ENCODE measurements at regions of chr11 and their contacts with region 1.

Region 1: GRCh38 chr11:96242971-96243647 is 99.9 kb downstream of the MAML2 start:
- DNase-seq: peak; percentile 83 to 96
- ATAC-seq: peak; percentile 99 to 100
- H3K4me3 ChIP-seq: peak overlapping the region; percentile 43
- H3K27ac ChIP-seq: peak overlapping the region; percentile 81 to 89
- H3K4me1 ChIP-seq: peaks cover 36% of the 10 kb centered on the region
- CTCF ChIP-seq: no peak
- EP300 ChIP-seq: no peak
- POLR2A ChIP-seq: no peak
- RAD21 ChIP-seq: no peak; a peak in 2 of 5 replicates

Region 2: DNA sequence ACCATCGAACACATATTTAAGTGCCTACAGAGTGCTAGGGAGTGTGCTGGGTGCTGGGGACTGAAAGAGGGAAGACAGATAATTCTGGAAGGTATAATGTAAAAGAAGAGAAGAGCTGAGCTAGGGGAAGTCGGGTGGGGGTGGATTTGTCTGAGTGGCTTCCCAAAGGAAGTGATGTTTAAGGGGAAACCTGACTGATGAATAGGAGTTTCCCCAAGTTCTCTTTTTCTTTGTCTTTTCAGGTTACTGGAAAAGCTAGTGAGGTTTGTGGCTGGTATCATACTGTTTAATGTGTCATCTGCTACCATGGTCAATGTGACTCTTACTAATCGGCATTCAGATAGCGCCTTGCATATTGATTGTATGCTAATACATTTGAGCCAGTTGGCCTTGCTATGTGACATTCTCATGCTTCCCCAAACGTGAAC is 167.6 kb before region 1 on chr11:
- CTCF ChIA-PET with region 1: no interaction called
- POLR2A ChIA-PET with region 1: no interaction called
- DNase-seq: no peak
- ATAC-seq: no peak
- H3K4me3 ChIP-seq: no peak overlapping the region
- H3K27ac ChIP-seq: no peak overlapping the region
- H3K4me1 ChIP-seq: no peaks in the 10 kb centered on the region
- CTCF ChIP-seq: no peak
- EP300 ChIP-seq: no peak
- POLR2A ChIP-seq: no peak
- RAD21 ChIP-seq: no peak

Region 3: GRCh38 chr11:96155627-96156378 is 87.3 kb before region 1 on chr11:
- CTCF ChIA-PET with region 1: interaction called, 6 read pairs
- POLR2A ChIA-PET with region 1: interaction called, 11 read pairs
- DNase-seq: peak; percentile 51 to 76
- ATAC-seq: peak; percentile 84 to 89
- H3K4me3 ChIP-seq: no peak overlapping the region
- H3K27ac ChIP-seq: peak overlapping the region; percentile 83 to 91
- H3K4me1 ChIP-seq: peaks cover 42% of the 10 kb centered on the region
- CTCF ChIP-seq: peak; percentile 25; the same call in 2 of the 3 replicates
- EP300 ChIP-seq: peak in 1 of 2 experiments; percentile 17; a peak in 1 of 5 replicates
- POLR2A ChIP-seq: no peak
- RAD21 ChIP-seq: peak; percentile 35 to 45

Region 4: GRCh38 chr11:96306933-96307775 is 64.0 kb after region 1 on chr11:
- CTCF ChIA-PET with region 1: interaction called, 4 read pairs
- POLR2A ChIA-PET with region 1: interaction called, 13 read pairs
- DNase-seq: peak; percentile 67 to 94
- ATAC-seq: peak; percentile 92 to 96
- H3K4me3 ChIP-seq: peak overlapping the region; percentile 31
- H3K27ac ChIP-seq: peak overlapping the region; percentile 81 to 92
- H3K4me1 ChIP-seq: peaks cover 74% of the 10 kb centered on the region
- CTCF ChIP-seq: no peak
- EP300 ChIP-seq: no peak
- POLR2A ChIP-seq: no peak
- RAD21 ChIP-seq: no peak

Measured in A549 (cell line).